ENCODE measurements at regions of chr14 and their contacts with region 1.

Region 1: DNA sequence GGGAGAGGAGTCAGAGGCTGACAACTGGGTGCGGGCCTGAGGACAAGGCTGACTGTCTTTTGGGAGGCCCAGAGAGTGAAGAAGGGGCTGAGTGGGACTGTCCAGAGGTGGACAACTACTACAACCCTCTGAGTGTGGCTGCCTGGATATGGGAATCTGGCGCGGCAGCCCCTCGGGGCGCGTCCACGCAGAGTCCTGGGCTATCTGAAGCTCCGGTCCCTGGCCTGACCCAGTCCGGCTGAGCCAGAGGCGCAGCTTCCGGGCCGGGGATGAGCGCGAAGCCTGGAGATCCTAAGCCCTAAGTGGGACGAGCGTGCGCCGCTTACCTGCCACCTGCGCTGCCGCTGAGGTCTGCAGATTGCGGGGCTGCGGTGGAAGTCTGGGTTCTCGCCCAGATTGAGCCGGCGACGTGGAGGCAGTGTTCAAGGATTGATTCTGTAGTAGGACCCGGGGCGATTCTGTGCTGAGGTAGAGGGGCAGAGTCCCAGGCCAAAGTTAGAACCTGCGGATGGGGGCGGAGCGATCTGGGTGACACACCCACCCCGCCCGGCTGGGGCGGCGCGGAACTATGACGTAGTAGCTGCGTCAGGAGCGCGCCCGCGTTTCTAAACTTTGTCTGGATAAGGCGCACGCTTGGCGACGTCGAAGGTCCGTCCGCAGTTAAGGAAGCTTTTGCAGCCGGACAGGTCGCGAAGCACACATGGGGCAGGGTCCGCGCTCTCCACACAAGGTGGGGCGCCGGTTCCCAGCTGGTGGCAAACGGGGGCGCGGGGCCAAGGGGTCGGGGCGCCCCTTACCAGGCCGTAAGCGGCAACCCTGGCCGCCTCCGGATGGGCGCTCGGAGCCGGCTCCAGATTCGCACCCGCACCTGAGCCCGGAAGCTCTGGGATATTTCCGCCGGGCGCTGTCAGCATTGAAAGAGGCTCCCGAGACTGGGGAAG is at the starts of genes DHRS1 and NOP9:
- DNase-seq: peak; percentile 87 to 93 (median 89)
- H3K4me3 ChIP-seq: peak within 1 kb of the TSS; percentile 83
- H3K4me3 Mint-ChIP-seq: peak within 1 kb of the TSS; percentile 89 to 97 (median 92)
- H3K27ac ChIP-seq: peak within 1 kb of the TSS; percentile 79
- H3K27ac Mint-ChIP-seq: peak within 1 kb of the TSS; percentile 94 to 99 (median 96)
- H3K4me1 ChIP-seq: peaks cover 47% of the 10 kb centered on the region
- H3K4me1 Mint-ChIP-seq: peaks cover 41 to 59% (median 54%) of the 10 kb centered on the region in 3 donors
- H3K27me3 ChIP-seq: no peaks in the 10 kb centered on the region
- H3K27me3 Mint-ChIP-seq: no peaks in the 10 kb centered on the region
- total RNA-seq, gene DHRS1: 9.3 to 9.8 TPM
- total RNA-seq, gene NOP9: 44.1 to 47.1 TPM

Region 2: GRCh38 chr14:24123508-24124417 is 175.8 kb before region 1 on chr14:
- CTCF ChIA-PET with region 1: no interaction called
- POLR2A ChIA-PET with region 1: no interaction called
- DNase-seq: no peak
- H3K4me3 ChIP-seq: no peak overlapping the region
- H3K4me3 Mint-ChIP-seq: peak overlapping the region in 1 of 7 donors; percentile 35
- H3K27ac ChIP-seq: no peak overlapping the region
- H3K27ac Mint-ChIP-seq: peak overlapping the region in 4 of 8 donors; percentile 29 to 46 (median 34)
- H3K4me1 ChIP-seq: no peaks in the 10 kb centered on the region
- H3K4me1 Mint-ChIP-seq: peaks cover 0 to under 1% (median 0%) of the 10 kb centered on the region in 3 donors
- H3K27me3 ChIP-seq: no peaks in the 10 kb centered on the region
- H3K27me3 Mint-ChIP-seq: no peaks in the 10 kb centered on the region

Region 3: DNA sequence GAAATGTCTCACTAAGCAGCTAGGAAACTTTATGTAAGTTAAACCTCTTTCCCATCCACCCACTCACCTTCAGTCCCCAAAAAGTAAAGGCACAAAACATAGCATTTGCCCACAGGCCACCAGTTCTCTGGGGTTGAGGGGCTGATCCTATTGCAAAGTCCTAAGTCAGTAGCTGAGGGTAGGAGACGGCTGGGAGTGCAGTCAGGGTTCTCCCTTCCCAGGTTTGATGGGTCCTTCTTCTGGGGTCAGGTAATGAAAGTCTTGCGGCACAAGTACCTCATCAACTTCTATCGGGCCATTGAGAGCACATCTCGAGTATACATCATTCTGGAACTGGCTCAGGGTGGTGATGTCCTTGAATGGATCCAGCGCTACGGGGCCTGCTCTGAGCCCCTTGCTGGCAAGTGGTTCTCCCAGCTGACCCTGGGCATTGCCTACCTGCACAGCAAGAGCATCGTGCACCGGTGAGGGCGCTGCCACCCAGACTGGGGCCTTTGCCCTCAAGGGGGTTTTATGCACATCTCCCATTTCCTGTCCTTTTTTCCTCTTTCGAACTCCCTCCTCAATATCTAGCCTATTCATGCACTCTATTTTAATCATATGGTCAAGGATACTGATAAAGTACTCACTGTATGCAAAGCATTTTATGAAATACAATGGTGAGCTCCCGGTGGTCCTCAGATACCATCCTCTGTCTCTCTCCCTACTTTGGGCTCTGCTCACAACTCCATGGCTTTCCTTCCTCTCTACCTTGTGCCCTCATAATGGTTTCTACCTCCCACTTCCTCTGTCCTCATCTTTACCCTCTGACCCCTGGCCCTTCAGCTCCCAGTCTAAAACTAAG is 93.0 kb before region 1 on chr14:
- CTCF ChIA-PET with region 1: no interaction called
- POLR2A ChIA-PET with region 1: no interaction called
- DNase-seq: no peak
- H3K4me3 ChIP-seq: no peak overlapping the region
- H3K4me3 Mint-ChIP-seq: peak overlapping the region in 4 of 7 donors; percentile 3 to 22 (median 18)
- H3K27ac ChIP-seq: no peak overlapping the region
- H3K27ac Mint-ChIP-seq: peak overlapping the region; percentile 39 to 97 (median 94)
- H3K4me1 ChIP-seq: peaks cover 11% of the 10 kb centered on the region
- H3K4me1 Mint-ChIP-seq: peaks cover 40 to 69% (median 54%) of the 10 kb centered on the region in 3 donors
- H3K27me3 ChIP-seq: no peaks in the 10 kb centered on the region
- H3K27me3 Mint-ChIP-seq: peaks cover 0 to 3% of the 10 kb centered on the region in 2 donors

Region 4: GRCh38 chr14:24271134-24271833 is 28.2 kb before region 1 on chr14 and contains the start of gene RABGGTA:
- CTCF ChIA-PET with region 1: interaction called, 20 read pairs
- POLR2A ChIA-PET with region 1: no interaction called
- DNase-seq: peak; percentile 87 to 98 (median 96)
- H3K4me3 ChIP-seq: peak within 1 kb of the TSS; percentile 63
- H3K4me3 Mint-ChIP-seq: peak within 1 kb of the TSS; percentile 88 to 93 (median 92)
- H3K27ac ChIP-seq: peak within 1 kb of the TSS; percentile 86
- H3K27ac Mint-ChIP-seq: peak within 1 kb of the TSS; percentile 96 to 99 (median 98)
- H3K4me1 ChIP-seq: peaks cover 30% of the 10 kb centered on the region
- H3K4me1 Mint-ChIP-seq: peaks cover 37 to 44% (median 41%) of the 10 kb centered on the region in 3 donors
- H3K27me3 ChIP-seq: no peaks in the 10 kb centered on the region
- H3K27me3 Mint-ChIP-seq: peaks cover 0 to 5% of the 10 kb centered on the region in 2 donors
- total RNA-seq, gene RABGGTA: 41.0 to 41.8 TPM

Region 5: DNA sequence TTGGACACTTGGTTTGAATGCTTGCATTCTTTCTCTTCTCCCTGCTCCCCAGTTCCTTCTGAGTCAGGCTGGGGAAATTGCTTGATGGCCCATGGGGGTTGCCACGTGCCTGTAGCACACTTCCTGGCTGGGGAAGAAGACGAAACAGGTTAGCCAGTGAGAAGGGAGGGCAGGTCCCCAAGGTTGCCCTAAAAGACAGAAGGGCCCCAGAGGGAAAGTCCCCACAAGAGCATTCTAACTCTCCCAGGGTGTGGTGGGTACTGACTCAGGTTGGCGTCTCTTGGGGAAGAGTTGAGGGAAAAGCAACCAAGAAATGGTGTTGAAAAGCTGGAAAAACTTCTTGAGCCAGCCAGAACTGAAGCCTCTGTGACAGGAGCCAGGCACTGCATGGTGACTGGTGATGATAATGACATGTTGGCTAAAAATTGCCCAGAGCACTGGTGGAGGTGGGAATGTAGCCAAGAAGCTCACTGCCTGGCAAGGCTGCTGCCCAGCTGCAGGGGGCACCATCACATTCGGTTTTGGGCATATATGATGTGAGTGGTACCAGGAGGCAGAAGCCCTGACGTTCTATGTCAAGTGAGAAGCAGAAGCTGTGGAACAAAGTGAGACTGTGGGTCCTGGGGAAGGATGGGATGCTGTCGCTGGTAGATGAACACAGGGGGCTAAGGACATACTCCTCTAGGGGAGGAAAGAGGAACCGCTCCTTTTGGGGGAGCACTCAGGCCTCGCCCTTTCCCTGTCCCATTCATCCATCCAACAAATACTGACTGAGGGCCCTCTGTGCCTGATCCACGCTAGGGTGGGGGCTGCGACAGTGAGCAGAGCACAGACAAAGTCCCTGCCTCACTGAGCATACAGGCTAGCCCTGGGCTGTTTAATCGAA is 20.0 kb before region 1 on chr14:
- CTCF ChIA-PET with region 1: interaction called, 10 read pairs
- POLR2A ChIA-PET with region 1: no interaction called
- DNase-seq: peak in 3 of 5 donors; percentile 26 to 39 (median 27)
- H3K4me3 ChIP-seq: no peak overlapping the region
- H3K4me3 Mint-ChIP-seq: no peak overlapping the region
- H3K27ac ChIP-seq: no peak overlapping the region
- H3K27ac Mint-ChIP-seq: peak overlapping the region; percentile 34 to 93 (median 80)
- H3K4me1 ChIP-seq: peaks cover 18% of the 10 kb centered on the region
- H3K4me1 Mint-ChIP-seq: peaks cover 17 to 28% (median 21%) of the 10 kb centered on the region in 3 donors
- H3K27me3 ChIP-seq: no peaks in the 10 kb centered on the region
- H3K27me3 Mint-ChIP-seq: no peaks in the 10 kb centered on the region

Measured in CD8-positive, alpha-beta memory T cell (primary cell).